ENCODE measurements at regions of chr17 and their contacts with region 1.

Region 1: GRCh38 chr17:35969558-35970380 is 11.5 kb downstream of the CCL16 start:
- DNase-seq: peak; percentile 81
- ATAC-seq: peak; percentile 70
- H3K4me3 ChIP-seq: no peak overlapping the region
- H3K27ac ChIP-seq: no peak overlapping the region
- H3K4me1 ChIP-seq: no peaks in the 10 kb centered on the region
- H3K27me3 ChIP-seq: no peaks in the 10 kb centered on the region
- CTCF ChIP-seq: peak; percentile 79

Region 2: DNA sequence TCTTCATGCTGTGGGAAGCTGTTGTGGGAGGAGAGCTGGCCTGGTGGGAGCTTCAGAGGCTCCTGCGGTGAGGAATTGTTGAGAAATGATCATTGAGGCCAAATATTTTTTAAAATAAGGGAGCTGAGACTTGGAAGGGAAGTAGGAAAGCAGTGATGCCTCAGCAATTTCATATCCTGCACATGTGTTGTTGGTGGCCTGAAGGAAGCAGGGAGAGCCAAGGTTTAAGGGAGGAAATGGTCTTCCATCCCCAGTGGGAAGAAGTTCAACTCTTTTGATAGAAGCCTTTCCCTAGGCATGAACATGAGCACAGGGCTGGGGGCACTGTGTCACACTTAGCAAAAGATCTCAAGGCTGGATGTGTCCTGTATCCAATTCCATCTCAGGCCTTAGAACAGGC is 16.9 kb after region 1 on chr17 and contains the start of gene CCL14:
- CTCF ChIA-PET with region 1: no interaction called
- POLR2A ChIA-PET with region 1: no interaction called
- intact Hi-C with region 1: no loop called
- DNase-seq: no peak
- ATAC-seq: no peak
- H3K4me3 ChIP-seq: no peak within 1 kb of the TSS
- H3K27ac ChIP-seq: no peak within 1 kb of the TSS
- H3K4me1 ChIP-seq: no peaks in the 10 kb centered on the region
- H3K27me3 ChIP-seq: no peaks in the 10 kb centered on the region; the same call in none of the 2 replicates
- CTCF ChIP-seq: no peak
- total RNA-seq, gene CCL14: not detected in 2 replicates

Region 3: DNA sequence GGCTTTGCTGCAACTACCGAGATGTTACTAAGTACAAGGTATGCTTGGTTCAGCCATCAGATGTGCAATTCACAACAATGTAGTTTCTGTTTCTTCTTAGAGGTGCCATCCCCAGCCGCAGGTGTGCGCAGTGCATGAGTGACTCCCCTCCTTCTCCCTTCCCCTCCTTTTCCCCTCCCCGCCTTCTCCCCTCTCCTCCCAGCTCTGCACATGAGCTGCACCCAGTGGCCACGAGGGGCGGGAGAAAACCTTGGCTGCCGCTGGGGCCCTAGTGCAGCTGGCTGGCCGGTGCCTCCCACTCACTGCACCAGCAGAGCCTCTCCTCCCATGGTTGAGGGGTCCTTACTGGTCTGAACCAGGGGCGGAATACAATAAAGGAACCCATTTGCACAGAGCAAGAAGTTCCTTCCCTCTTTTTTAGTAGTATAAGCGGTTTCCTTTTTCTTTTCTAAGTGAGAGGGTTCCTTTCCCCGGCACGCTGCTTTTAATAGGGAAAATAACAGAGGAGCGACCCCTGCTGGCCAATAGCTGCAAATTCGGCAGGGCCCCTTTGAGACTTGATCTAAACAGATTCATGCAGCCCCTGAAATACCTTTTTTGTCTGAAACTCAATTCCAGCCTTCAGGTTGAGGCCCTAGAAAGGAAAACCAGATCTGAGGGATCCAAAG is 39.4 kb after region 1 on chr17:
- CTCF ChIA-PET with region 1: interaction called, 3 read pairs
- POLR2A ChIA-PET with region 1: no interaction called
- intact Hi-C with region 1: loop called (anchors 5 kb)
- DNase-seq: peak; percentile 42
- ATAC-seq: no peak
- H3K4me3 ChIP-seq: no peak overlapping the region
- H3K27ac ChIP-seq: no peak overlapping the region
- H3K4me1 ChIP-seq: no peaks in the 10 kb centered on the region
- H3K27me3 ChIP-seq: peaks cover 13% of the 10 kb centered on the region
- CTCF ChIP-seq: peak; percentile 70

Region 4: GRCh38 chr17:36148559-36149295 is 179.0 kb after region 1 on chr17:
- CTCF ChIA-PET with region 1: interaction called, 4 read pairs
- POLR2A ChIA-PET with region 1: no interaction called
- intact Hi-C with region 1: loop called (anchors 1 kb)
- DNase-seq: peak; percentile 55
- ATAC-seq: peak; percentile 86
- H3K4me3 ChIP-seq: no peak overlapping the region
- H3K27ac ChIP-seq: no peak overlapping the region
- H3K4me1 ChIP-seq: no peaks in the 10 kb centered on the region
- H3K27me3 ChIP-seq: peaks cover 19% of the 10 kb centered on the region
- CTCF ChIP-seq: peak; percentile 92

Region 5: GRCh38 chr17:36482611-36483504 is 513.1 kb after region 1 on chr17:
- CTCF ChIA-PET with region 1: no interaction called
- POLR2A ChIA-PET with region 1: no interaction called
- intact Hi-C with region 1: loop called (anchors 5 kb)
- DNase-seq: peak; percentile 73
- ATAC-seq: peak; percentile 60
- H3K4me3 ChIP-seq: peak overlapping the region; percentile 32; the same call in 1 of the 2 replicates
- H3K27ac ChIP-seq: no peak overlapping the region
- H3K4me1 ChIP-seq: no peaks in the 10 kb centered on the region; the same call in 1 of the 2 replicates
- H3K27me3 ChIP-seq: peaks cover 10% of the 10 kb centered on the region; the same call in 1 of the 2 replicates
- CTCF ChIP-seq: peak; percentile 79